Activated B cell treated with CpG ODN at 0.5 μM for 24 hours (primary cell): ENCODE measurements at regions of chr7 and their contacts with region 1.

Region 1: DNA sequence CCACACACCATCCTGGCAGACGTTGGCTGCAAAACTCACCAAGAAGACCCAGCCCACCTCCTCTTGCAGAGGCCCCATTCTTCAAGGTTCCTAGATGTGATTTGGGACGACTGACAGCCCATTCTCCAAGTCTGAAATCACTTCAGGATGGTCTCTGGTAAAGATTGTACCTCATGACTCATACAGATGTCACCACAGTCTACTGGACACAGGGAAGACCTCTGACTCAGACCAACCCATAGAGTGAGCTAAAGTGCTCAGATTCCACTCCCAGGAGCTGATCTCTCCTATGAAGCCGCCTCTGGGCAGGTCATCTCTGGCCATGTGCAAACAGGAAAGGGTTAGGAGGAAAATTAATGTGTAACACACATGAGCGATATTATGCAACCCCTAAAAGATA is 102.4 kb upstream of the VWC2 start:
- DNase-seq: no peak
- ATAC-seq: no peak
- H3K4me3 Mint-ChIP-seq: no peak overlapping the region
- H3K27ac Mint-ChIP-seq: no peak overlapping the region
- H3K4me1 Mint-ChIP-seq: no peaks in the 10 kb centered on the region
- H3K27me3 Mint-ChIP-seq: no peaks in the 10 kb centered on the region
- CTCF ChIP-seq: no peak

Region 2: DNA sequence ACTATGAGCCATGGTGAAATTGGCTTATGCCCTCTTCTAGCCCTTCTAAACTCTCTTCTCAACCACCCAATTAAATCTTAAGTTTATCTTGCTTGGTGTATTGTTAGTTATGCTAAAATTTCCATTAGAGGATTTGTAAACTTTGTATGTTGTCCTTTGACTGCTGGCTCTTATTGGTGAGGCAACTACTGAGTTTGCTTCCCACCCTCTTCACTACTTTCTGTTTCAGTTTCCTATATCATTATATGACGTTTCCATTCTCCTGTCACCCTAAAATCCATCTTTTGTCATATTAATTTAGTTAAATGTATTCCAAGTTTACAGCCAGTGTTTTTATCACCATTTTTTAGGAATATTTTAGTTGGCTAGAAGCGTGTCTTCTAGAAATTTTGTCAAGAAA is 21.5 kb after region 1 on chr7:
- CTCF ChIA-PET with region 1: no interaction called
- POLR2A ChIA-PET with region 1: no interaction called
- intact Hi-C with region 1: loop called (anchors 1 kb)
- DNase-seq: no peak
- ATAC-seq: no peak
- H3K4me3 Mint-ChIP-seq: no peak overlapping the region
- H3K27ac Mint-ChIP-seq: no peak overlapping the region
- H3K4me1 Mint-ChIP-seq: no peaks in the 10 kb centered on the region
- H3K27me3 Mint-ChIP-seq: no peaks in the 10 kb centered on the region
- CTCF ChIP-seq: no peak

Region 3: GRCh38 chr7:49866076-49866735 is 195.2 kb after region 1 on chr7:
- CTCF ChIA-PET with region 1: no interaction called
- POLR2A ChIA-PET with region 1: no interaction called
- intact Hi-C with region 1: no loop called
- DNase-seq: no peak
- ATAC-seq: no peak
- H3K4me3 Mint-ChIP-seq: no peak overlapping the region
- H3K27ac Mint-ChIP-seq: no peak overlapping the region
- H3K4me1 Mint-ChIP-seq: no peaks in the 10 kb centered on the region
- H3K27me3 Mint-ChIP-seq: no peaks in the 10 kb centered on the region
- CTCF ChIP-seq: no peak

Region 4: DNA sequence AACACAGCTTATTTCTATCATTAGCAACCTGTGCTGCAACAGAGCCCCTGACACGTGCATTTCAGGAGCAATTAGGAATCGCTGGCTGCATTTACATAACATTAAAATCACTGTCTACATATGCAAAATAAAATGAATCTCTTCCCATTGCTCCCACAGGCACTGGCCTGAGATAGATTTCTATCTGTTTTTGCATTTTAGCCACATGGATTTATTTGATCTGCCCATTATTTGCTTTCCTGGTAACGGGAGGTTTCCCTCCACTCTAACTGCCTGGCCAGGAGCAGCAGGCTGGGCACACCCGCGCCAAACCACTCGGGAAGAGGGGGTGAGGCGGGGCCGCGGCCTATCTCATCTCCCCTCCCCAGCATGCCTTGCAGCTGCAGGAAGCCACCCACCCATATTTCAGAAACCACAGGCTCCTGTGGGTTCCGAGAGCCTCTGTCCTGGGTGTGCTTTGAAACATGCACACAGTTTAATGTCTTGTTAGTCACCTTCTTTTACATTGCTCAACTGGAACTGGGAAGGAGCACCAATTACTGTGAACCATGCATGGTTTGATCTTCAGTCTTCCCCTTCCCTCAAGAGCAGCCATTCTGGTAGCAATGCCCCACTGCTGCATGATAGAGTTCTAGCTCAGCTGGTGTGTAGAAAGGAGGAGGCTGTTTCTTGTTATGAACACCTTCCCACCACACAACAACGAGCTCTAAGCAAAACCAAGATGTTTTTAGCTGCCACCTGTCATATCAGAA is 595.8 kb after region 1 on chr7:
- CTCF ChIA-PET with region 1: no interaction called
- POLR2A ChIA-PET with region 1: no interaction called
- intact Hi-C with region 1: no loop called
- DNase-seq: no peak
- ATAC-seq: peak; percentile 66
- H3K4me3 Mint-ChIP-seq: peak overlapping the region; percentile 78
- H3K27ac Mint-ChIP-seq: peak overlapping the region; percentile 87
- H3K4me1 Mint-ChIP-seq: peaks cover 99% of the 10 kb centered on the region
- H3K27me3 Mint-ChIP-seq: no peaks in the 10 kb centered on the region
- CTCF ChIP-seq: no peak